ENCODE measurements at regions of chrX and their contacts with region 1.

Region 1: GRCh38 chrX:45621376-45622041 is 420.8 kb upstream of the DIPK2B start:
- DNase-seq: peak; percentile 20
- ATAC-seq: peak; percentile 88
- H3K4me3 Mint-ChIP-seq: no peak overlapping the region
- H3K27ac Mint-ChIP-seq: peak overlapping the region; percentile 37
- H3K4me1 Mint-ChIP-seq: peaks cover 30% of the 10 kb centered on the region
- H3K27me3 Mint-ChIP-seq: peaks cover 3% of the 10 kb centered on the region

Region 2: DNA sequence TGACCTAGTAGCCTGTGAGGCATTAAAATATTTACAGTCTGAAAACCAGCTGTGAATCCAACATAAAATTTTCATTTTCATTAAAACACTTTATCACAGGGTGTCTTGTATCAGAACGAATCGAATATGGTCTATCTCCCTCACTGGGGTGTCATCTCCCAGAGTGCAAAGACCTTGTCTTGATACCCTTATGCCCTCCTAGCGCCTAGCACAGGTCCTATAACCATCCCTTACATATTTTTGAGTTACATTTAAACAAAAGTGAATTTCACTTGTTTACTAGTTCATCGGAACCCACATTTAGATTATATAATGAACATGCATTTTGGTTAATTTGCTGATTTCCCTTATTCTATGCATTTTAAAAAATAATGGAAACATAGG is 434.9 kb before region 1 on chrX:
- CTCF ChIA-PET with region 1: no interaction called
- POLR2A ChIA-PET with region 1: no interaction called
- intact Hi-C with region 1: loop called in 1 of 2 experiments (anchors 5 kb)
- DNase-seq: no peak
- ATAC-seq: no peak
- H3K4me3 Mint-ChIP-seq: peak overlapping the region; percentile 70
- H3K27ac Mint-ChIP-seq: peak overlapping the region; percentile 72
- H3K4me1 Mint-ChIP-seq: peaks cover 31% of the 10 kb centered on the region
- H3K27me3 Mint-ChIP-seq: no peaks in the 10 kb centered on the region

Region 3: DNA sequence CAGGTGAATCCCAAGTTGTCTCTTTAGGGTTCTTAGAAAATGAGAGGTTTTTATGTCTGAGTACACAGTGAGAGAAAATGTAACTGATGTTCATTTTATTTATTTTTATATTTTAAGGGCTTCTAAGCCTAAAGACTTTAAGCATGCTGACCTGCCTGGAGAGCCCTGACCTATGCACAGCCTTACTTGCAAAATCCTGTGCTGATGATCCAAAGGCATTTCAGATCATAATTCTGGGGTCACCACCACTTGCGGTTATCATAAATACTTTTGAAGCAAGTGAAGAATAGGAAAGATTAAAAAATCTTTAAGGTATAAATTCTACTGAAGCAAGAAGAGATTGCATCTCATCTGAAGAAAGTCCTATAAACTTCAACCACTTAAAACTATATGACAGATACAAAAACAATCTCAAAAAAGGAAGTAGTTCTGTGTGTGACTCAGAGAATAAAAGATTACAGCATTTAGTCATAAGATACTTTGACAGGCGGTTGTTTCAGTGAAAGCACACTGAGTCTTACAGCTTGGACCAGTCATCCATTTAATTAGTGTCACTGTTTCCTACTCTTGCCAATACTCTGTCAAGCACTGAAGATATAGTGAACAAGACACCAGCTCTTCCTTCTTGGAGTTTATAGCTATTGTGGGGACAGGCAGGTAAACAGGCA is 175.6 kb before region 1 on chrX:
- CTCF ChIA-PET with region 1: no interaction called
- POLR2A ChIA-PET with region 1: no interaction called
- intact Hi-C with region 1: loop called in 1 of 2 experiments (anchors 5 kb)
- DNase-seq: no peak
- ATAC-seq: peak; percentile 95
- H3K4me3 Mint-ChIP-seq: no peak overlapping the region
- H3K27ac Mint-ChIP-seq: peak overlapping the region; percentile 77
- H3K4me1 Mint-ChIP-seq: peaks cover 12% of the 10 kb centered on the region
- H3K27me3 Mint-ChIP-seq: no peaks in the 10 kb centered on the region

Region 4: DNA sequence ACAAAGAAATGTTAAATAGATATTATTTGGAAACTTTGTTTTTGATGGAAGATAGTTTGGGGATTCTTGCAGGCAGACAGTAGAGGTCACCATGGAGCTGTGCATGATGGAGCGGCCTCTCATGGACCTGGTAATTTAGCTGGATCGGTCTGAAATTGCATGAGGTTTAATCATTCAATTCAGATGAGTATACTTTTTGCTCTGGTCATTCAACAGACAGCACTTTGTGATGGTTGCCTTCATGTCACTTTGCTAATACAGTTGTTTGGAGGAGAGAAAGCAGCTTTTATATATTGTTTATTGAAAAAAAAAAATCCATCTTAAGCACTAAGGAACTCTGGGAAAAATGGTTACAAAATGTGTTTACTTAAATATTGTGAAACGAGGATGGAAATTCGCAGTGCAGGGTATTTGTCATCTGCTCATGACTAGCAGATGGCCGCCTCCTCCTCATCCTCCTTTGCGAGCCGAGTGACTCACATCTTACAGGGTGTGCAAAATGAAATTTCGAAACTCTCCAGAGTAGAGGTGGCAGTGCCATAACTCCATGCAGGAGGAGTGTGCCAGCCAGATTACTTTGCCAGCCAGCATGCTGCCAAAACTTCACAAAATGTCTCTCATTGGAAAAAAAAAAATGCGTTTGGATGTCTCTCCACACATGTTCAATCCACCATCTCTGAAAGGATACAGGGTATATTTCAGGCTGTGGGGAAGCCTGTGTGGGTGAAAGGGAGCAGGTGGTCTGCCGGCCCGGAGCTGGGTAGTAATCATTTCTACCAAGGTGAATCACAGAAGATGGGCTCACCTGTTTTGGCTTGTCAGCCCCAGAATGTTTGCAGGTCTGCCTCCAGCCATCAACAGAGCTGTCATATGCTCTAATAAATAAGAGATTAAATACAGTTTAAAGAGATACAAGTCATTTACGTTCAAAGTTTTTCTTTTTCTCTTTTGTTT is 106.0 kb before region 1 on chrX:
- CTCF ChIA-PET with region 1: no interaction called
- POLR2A ChIA-PET with region 1: no interaction called
- intact Hi-C with region 1: loop called in 1 of 2 experiments (anchors 5 kb)
- DNase-seq: peak; percentile 59
- ATAC-seq: peak; percentile 92
- H3K4me3 Mint-ChIP-seq: peak overlapping the region; percentile 43
- H3K27ac Mint-ChIP-seq: peak overlapping the region; percentile 39
- H3K4me1 Mint-ChIP-seq: peaks cover 23% of the 10 kb centered on the region
- H3K27me3 Mint-ChIP-seq: no peaks in the 10 kb centered on the region

Region 5: GRCh38 chrX:45758319-45758718 is 136.8 kb after region 1 on chrX:
- CTCF ChIA-PET with region 1: no interaction called
- POLR2A ChIA-PET with region 1: interaction called, 5 read pairs
- intact Hi-C with region 1: loop called (anchors 1 to 2 kb)
- DNase-seq: peak; percentile 66
- ATAC-seq: peak; percentile 27
- H3K4me3 Mint-ChIP-seq: peak overlapping the region; percentile 57
- H3K27ac Mint-ChIP-seq: peak overlapping the region; percentile 90
- H3K4me1 Mint-ChIP-seq: peaks cover 72% of the 10 kb centered on the region
- H3K27me3 Mint-ChIP-seq: no peaks in the 10 kb centered on the region

Region 6: DNA sequence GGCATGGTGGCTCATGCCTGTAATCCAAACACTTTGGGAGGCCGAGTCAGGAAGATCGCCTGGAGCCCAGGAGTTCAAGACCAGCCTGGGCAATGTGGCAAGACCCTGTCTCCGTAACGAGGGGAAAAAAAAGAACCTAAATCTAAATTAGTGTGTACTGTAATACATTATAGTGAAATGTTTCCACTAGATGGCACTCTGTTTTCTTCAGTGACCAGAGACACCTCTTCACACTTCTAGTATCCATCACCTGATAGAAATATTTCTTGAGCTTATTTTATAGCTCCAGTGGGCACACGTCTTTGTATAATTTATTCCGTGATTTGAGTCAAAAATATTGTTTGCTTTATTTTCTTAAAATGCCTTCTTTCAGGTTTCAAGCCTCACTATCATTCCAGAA is 180.0 kb after region 1 on chrX:
- CTCF ChIA-PET with region 1: no interaction called
- POLR2A ChIA-PET with region 1: interaction called, 3 read pairs
- intact Hi-C with region 1: loop called in 1 of 2 experiments (anchors 2 kb)
- DNase-seq: no peak
- ATAC-seq: peak; percentile 55
- H3K4me3 Mint-ChIP-seq: peak overlapping the region; percentile 63
- H3K27ac Mint-ChIP-seq: peak overlapping the region; percentile 92
- H3K4me1 Mint-ChIP-seq: peaks cover 71% of the 10 kb centered on the region
- H3K27me3 Mint-ChIP-seq: no peaks in the 10 kb centered on the region

Region 7: GRCh38 chrX:45806410-45807121 is 185.1 kb after region 1 on chrX:
- CTCF ChIA-PET with region 1: no interaction called
- POLR2A ChIA-PET with region 1: interaction called, 7 read pairs
- intact Hi-C with region 1: loop called (anchors 2 kb)
- DNase-seq: peak; percentile 65
- ATAC-seq: peak; percentile 52
- H3K4me3 Mint-ChIP-seq: peak overlapping the region; percentile 68
- H3K27ac Mint-ChIP-seq: peak overlapping the region; percentile 88
- H3K4me1 Mint-ChIP-seq: peaks cover 85% of the 10 kb centered on the region
- H3K27me3 Mint-ChIP-seq: no peaks in the 10 kb centered on the region

Measured in activated CD4-positive, alpha-beta T cell treated with anti-CD3 and anti-CD28 coated beads for 36 hours (primary cell).